ENCODE measurements at regions of chr1 and their contacts with region 1.

Region 1: DNA sequence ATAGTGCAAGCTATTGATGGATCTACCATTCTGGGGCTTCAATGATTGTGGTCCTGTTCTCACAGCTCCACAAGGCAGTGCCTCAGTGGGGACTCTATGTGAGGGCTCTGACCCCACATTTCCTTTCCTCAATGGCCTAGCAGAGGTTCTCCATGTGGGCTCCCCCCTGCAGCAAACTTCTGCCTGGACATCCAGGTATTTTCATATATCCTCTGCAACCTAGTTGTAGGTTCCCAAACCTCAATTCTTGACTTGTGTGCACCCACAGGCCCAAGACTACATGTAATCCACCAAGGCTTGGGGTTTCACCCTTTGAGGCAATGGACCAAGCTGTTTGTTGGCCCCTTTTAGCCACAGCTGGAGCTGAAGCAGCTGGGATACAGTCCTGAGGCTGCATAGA is 35.9 kb upstream of the CFHR3 start:
- DNase-seq: no peak
- H3K4me3 ChIP-seq: no peak overlapping the region
- H3K4me3 Mint-ChIP-seq: no peak overlapping the region
- H3K27ac Mint-ChIP-seq: no peak overlapping the region
- H3K4me1 ChIP-seq: no peaks in the 10 kb centered on the region
- H3K4me1 Mint-ChIP-seq: peaks cover 6% of the 10 kb centered on the region
- H3K27me3 ChIP-seq: no peaks in the 10 kb centered on the region
- H3K27me3 Mint-ChIP-seq: no peaks in the 10 kb centered on the region
- CTCF ChIP-seq: no peak

Region 2: GRCh38 chr1:196598942-196599748 is 139.6 kb before region 1 on chr1:
- CTCF ChIA-PET with region 1: no interaction called
- POLR2A ChIA-PET with region 1: no interaction called
- intact Hi-C with region 1: no loop called
- DNase-seq: no peak
- H3K4me3 ChIP-seq: no peak overlapping the region
- H3K4me3 Mint-ChIP-seq: no peak overlapping the region
- H3K27ac Mint-ChIP-seq: no peak overlapping the region
- H3K4me1 ChIP-seq: no peaks in the 10 kb centered on the region
- H3K4me1 Mint-ChIP-seq: no peaks in the 10 kb centered on the region
- H3K27me3 ChIP-seq: no peaks in the 10 kb centered on the region
- H3K27me3 Mint-ChIP-seq: no peaks in the 10 kb centered on the region
- CTCF ChIP-seq: no peak

Region 3: DNA sequence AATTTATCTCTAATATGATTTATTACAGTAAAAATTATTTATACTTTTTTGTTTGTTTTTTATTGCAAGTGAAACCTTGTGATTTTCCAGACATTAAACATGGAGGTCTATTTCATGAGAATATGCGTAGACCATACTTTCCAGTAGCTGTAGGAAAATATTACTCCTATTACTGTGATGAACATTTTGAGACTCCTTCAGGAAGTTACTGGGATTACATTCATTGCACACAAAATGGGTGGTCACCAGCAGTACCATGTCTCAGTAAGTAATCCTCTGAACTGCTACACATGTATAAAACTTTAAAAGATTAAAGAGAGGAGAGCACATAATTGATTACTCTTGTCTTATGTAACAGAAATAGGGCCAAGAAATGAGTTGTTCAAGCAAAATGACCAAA is 40.4 kb after region 1 on chr1:
- CTCF ChIA-PET with region 1: no interaction called
- POLR2A ChIA-PET with region 1: no interaction called
- intact Hi-C with region 1: no loop called
- DNase-seq: no peak
- H3K4me3 ChIP-seq: no peak overlapping the region
- H3K4me3 Mint-ChIP-seq: no peak overlapping the region
- H3K27ac Mint-ChIP-seq: no peak overlapping the region
- H3K4me1 ChIP-seq: no peaks in the 10 kb centered on the region
- H3K4me1 Mint-ChIP-seq: no peaks in the 10 kb centered on the region
- H3K27me3 ChIP-seq: no peaks in the 10 kb centered on the region
- H3K27me3 Mint-ChIP-seq: no peaks in the 10 kb centered on the region
- CTCF ChIP-seq: no peak

Region 4: GRCh38 chr1:196890716-196891115 is 152.0 kb after region 1 on chr1:
- CTCF ChIA-PET with region 1: no interaction called
- POLR2A ChIA-PET with region 1: no interaction called
- intact Hi-C with region 1: loop called (anchors 5 kb)
- DNase-seq: no peak
- H3K4me3 ChIP-seq: no peak overlapping the region
- H3K4me3 Mint-ChIP-seq: no peak overlapping the region
- H3K27ac Mint-ChIP-seq: no peak overlapping the region
- H3K4me1 ChIP-seq: no peaks in the 10 kb centered on the region
- H3K4me1 Mint-ChIP-seq: no peaks in the 10 kb centered on the region
- H3K27me3 ChIP-seq: no peaks in the 10 kb centered on the region
- H3K27me3 Mint-ChIP-seq: peaks cover 8% of the 10 kb centered on the region
- CTCF ChIP-seq: no peak

Region 5: GRCh38 chr1:197066713-197067456 is 328.2 kb after region 1 on chr1 and contains the start of gene F13B:
- CTCF ChIA-PET with region 1: no interaction called
- POLR2A ChIA-PET with region 1: no interaction called
- intact Hi-C with region 1: loop called (anchors 1 kb)
- DNase-seq: no peak
- H3K4me3 ChIP-seq: no peak within 1 kb of the TSS
- H3K4me3 Mint-ChIP-seq: no peak within 1 kb of the TSS
- H3K27ac Mint-ChIP-seq: no peak within 1 kb of the TSS
- H3K4me1 ChIP-seq: no peaks in the 10 kb centered on the region
- H3K4me1 Mint-ChIP-seq: no peaks in the 10 kb centered on the region
- H3K27me3 ChIP-seq: no peaks in the 10 kb centered on the region
- H3K27me3 Mint-ChIP-seq: no peaks in the 10 kb centered on the region
- CTCF ChIP-seq: peak in 1 of 2 experiments; percentile 9
- total RNA-seq, gene F13B: 0.39 TPM in 1 of 2 replicates, not detected in the other

Measured in Caco-2 (cell line).